ENCODE measurements at regions of chr10 and their contacts with region 1.

Region 1: DNA sequence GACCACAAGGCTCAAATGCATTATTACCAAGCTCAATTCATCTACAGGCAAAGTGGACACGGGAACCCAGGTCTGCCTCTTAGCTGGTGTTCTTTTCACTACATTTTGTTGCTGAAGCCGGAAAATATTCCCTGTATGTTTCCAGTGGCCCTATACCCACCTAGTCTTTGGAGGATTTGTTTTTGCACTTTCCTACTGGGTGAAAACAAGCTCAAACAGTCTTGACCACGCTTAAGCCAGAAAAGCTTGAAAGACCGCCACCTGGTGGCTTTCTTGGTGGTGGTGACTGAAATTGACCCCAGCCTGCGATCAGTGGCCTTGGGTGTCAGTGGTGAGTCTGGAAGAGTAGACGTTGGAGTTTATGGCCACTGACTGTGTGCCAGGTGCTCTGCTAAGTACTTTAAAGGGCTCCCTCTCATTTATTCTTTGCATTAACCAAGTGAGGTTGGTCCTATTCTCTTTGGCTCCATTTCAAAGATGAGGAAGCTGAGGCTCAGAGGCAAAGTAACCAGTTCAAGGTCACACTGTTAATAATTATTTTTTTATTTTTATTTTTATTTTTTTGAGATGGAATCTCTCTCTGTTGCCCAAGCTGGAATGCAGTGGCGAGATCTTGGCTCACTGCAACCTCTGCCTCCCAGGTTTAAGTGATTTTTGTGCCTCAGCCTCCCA is 11.1 kb upstream of the CRTAC1 start:
- DNase-seq: peak; percentile 69 to 82 (median 75)
- ATAC-seq: peak; percentile 62
- H3K4me3 ChIP-seq: no peak overlapping the region
- H3K27ac ChIP-seq: no peak overlapping the region
- H3K4me1 ChIP-seq: peaks cover 4% of the 10 kb centered on the region
- H3K27me3 ChIP-seq: no peaks in the 10 kb centered on the region
- CTCF ChIP-seq: peak; percentile 62 to 78 (median 66)
- POLR2A ChIP-seq: no peak

Region 2: DNA sequence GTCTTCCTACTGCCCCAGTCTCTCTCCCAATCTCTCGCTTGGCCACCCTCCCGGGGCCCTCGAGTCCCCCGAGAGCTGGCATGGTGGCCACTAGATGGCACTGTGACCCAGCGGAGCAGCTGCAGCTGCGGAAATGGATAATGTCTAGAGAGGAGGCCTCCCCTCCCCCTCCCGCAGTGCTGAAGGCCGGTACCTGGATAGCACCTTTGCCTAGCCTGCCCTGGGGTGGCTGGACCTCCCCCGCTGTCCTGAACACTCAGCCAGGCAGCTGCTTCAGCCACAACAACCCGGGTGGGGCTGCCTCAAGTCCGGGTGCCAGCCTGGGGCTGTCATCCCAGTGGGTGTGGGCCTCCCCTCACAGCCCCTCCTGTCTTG is 126.7 kb before region 1 on chr10:
- intact Hi-C with region 1: loop called (anchors 5 kb)
- DNase-seq: peak; percentile 88 to 92 (median 90)
- ATAC-seq: peak; percentile 90
- H3K4me3 ChIP-seq: no peak overlapping the region
- H3K27ac ChIP-seq: no peak overlapping the region
- H3K4me1 ChIP-seq: peaks cover 14% of the 10 kb centered on the region
- H3K27me3 ChIP-seq: no peaks in the 10 kb centered on the region
- CTCF ChIP-seq: peak; percentile 92 to 96 (median 94)
- POLR2A ChIP-seq: no peak

Region 3: GRCh38 chr10:97991871-97992270 is 49.6 kb before region 1 on chr10:
- intact Hi-C with region 1: no loop called
- DNase-seq: peak in 1 of 4 donors; percentile 6
- ATAC-seq: no peak
- H3K4me3 ChIP-seq: no peak overlapping the region
- H3K27ac ChIP-seq: no peak overlapping the region
- H3K4me1 ChIP-seq: no peaks in the 10 kb centered on the region
- H3K27me3 ChIP-seq: no peaks in the 10 kb centered on the region
- CTCF ChIP-seq: no peak
- POLR2A ChIP-seq: no peak

Measured in body of pancreas (tissue), 4 donors.